AG04450 (cell line): ENCODE measurements at regions of chr10 and their contacts with region 1.

Region 1: DNA sequence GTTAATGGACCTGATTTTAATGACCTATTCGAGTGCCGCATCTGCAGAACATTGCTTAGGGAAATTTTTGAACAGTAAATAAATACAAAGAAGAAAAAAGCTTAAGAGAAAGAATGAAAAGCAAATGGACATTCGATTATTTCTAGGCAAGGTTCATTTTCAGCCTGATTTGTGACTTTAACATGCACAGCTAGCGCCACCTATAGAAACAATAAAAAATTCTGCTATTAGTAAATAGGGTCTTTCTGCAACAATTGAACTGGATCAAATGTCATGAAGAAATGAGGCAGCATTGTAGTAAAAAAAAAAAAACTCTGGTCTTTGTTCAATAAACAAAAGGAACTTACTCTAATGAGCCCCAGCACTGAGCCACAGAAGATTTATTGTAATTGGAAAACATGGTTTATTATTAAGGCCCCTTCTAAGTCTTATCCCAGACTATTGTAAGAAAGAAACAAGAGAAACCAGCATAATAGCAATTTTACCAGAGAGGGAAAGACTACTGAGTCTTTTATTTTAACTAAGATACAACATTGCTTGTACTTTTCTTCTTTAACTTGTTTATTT is 41.4 kb upstream of the GHITM start:
- DNase-seq: no peak
- H3K4me3 ChIP-seq: no peak overlapping the region
- H3K27ac ChIP-seq: no peak overlapping the region
- H3K27me3 ChIP-seq: peaks cover under 1% of the 10 kb centered on the region
- CTCF ChIP-seq: peak; percentile 58

Region 2: DNA sequence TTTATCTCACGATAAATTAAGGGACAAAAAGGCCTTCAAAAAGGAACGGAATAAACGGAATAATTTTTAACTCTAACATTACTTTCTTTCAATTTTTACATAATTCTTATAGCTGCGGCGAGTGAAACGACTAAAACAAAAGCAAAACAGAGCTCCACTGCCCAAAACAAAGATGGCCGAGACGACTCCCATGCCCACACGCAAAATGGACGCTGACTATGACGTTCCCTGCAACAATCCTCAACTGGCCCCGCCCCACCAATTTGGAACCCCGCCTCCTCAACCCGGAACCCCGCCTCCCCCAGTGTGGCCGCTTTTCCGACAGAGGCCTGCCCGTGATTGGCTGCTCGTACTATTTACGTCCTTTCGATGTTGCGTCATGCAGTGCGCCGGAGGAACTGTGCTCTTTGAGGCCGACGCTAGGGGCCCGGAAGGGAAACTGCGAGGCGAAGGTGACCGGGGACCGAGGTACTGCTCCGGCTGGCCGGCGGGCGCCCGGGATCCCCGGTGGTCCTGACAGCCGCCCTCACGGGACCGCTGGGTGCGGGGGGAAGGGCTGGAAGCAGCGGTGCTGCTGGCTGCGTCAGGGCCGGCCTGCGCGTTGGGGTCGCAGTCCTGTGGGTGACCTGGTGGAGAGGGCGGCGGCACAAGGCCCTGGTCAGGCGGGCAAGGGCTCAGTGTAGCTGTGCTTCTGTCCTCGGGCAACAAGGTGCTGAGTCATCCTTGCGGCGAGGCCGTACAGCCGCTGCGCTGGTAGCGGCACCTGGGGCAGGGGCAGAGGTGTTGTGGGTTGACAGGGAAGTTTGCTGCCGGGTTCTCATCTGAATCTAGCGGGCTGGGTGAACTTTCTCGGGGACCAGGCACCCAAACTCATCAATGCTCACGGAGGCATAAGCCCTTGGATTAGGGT is 41.5 kb after region 1 on chr10 and contains the start of gene GHITM:
- CTCF ChIA-PET with region 1: interaction called, 13 read pairs
- POLR2A ChIA-PET with region 1: no interaction called
- DNase-seq: peak; percentile 96
- H3K4me3 ChIP-seq: peak within 1 kb of the TSS; percentile 99
- H3K27ac ChIP-seq: peak within 1 kb of the TSS; percentile 89
- H3K27me3 ChIP-seq: no peaks in the 10 kb centered on the region
- CTCF ChIP-seq: peak; percentile 43
- polyA plus RNA-seq, gene GHITM: 189 and 227 TPM in 2 replicates